Activated CD8-positive, alpha-beta memory T cell treated with anti-CD3 and anti-CD28 coated beads, Interleukin-2, amount 10 ng/mL, durations not matched to agents 7 days and 5 days (primary cell): ENCODE measurements at regions of chr6 and their contacts with region 1.

Region 1: GRCh38 chr6:53725791-53726431 is 60.4 kb upstream of the KLHL31 start:
- DNase-seq: peak; percentile 80
- ATAC-seq: peak; percentile 87
- H3K4me3 Mint-ChIP-seq: no peak overlapping the region
- H3K27ac Mint-ChIP-seq: no peak overlapping the region
- H3K4me1 Mint-ChIP-seq: peaks cover 13% of the 10 kb centered on the region
- H3K27me3 Mint-ChIP-seq: peaks cover 26% of the 10 kb centered on the region

Region 2: DNA sequence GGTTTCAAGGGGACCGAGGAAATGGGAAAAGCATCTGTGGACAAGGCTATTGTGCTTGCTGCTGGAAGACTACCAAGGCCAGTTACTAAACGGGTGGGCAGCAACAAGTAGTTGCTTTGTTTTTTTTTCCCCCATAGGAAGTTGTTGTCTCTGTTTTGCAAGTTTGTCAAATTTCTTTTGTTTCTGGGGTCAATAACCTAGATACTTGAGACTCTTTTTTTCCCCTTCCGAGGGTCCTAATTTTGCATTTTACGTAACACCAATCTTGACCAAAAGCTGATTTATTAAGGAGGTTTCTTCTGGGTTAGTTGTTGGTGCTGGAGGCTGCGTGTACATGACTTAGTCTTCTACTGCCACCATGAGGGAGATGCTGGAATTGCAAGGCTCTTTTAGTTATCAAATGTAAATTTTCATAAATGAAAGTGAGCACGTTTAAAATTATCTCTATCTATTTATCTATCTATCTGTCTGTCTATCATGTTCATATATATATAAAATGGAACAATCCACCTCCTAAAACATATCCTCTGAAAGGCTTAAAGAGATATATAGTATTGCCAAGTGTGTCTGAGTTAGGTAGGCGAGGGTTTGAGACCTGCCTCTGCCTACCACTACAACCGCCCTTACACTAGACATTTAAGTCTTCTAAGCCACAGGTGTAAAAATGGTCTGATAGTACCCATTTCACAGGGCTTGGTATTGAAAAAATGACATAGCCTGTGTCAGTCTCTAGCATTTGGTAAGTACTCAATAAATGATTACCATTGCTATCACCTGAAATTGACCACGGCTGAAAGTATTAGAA is 241.2 kb before region 1 on chr6:
- CTCF ChIA-PET with region 1: interaction called, 14 read pairs
- DNase-seq: peak; percentile 82
- ATAC-seq: peak; percentile 42
- H3K4me3 Mint-ChIP-seq: no peak overlapping the region
- H3K27ac Mint-ChIP-seq: no peak overlapping the region
- H3K4me1 Mint-ChIP-seq: peaks cover 35% of the 10 kb centered on the region
- H3K27me3 Mint-ChIP-seq: peaks cover 30% of the 10 kb centered on the region

Region 3: GRCh38 chr6:53544470-53545308 is 181.2 kb before region 1 on chr6 and contains the start of gene GCLC:
- CTCF ChIA-PET with region 1: interaction called, 12 read pairs
- DNase-seq: peak; percentile 94
- ATAC-seq: peak; percentile 62
- H3K4me3 Mint-ChIP-seq: peak within 1 kb of the TSS; percentile 96
- H3K27ac Mint-ChIP-seq: peak within 1 kb of the TSS; percentile 94
- H3K4me1 Mint-ChIP-seq: peaks cover 56% of the 10 kb centered on the region
- H3K27me3 Mint-ChIP-seq: peaks cover 13% of the 10 kb centered on the region
- total RNA-seq, gene GCLC: 33.7 to 36.3 TPM

Region 4: DNA sequence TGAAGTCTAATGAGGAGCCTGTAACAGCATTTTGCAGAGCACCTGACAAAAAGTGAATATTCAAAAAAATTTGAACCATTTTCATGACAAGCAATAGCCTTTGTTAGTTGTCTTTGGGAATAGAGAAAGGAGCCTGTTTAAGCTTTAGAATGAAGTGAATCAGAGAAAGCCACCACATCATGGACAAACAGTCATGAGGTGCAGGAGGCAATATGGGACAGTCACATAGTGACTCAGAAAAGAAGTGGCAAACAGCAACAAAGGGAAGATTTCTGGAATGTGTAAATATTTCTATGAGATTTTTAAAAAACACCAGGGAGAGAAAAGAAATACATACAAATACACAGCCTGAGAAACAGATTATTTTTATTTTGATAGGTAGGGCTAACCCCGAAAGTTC is 66.9 kb before region 1 on chr6:
- CTCF ChIA-PET with region 1: interaction called, 12 read pairs
- DNase-seq: no peak
- ATAC-seq: no peak
- H3K4me3 Mint-ChIP-seq: no peak overlapping the region
- H3K27ac Mint-ChIP-seq: no peak overlapping the region
- H3K4me1 Mint-ChIP-seq: no peaks in the 10 kb centered on the region
- H3K27me3 Mint-ChIP-seq: peaks cover 26% of the 10 kb centered on the region

Region 5: DNA sequence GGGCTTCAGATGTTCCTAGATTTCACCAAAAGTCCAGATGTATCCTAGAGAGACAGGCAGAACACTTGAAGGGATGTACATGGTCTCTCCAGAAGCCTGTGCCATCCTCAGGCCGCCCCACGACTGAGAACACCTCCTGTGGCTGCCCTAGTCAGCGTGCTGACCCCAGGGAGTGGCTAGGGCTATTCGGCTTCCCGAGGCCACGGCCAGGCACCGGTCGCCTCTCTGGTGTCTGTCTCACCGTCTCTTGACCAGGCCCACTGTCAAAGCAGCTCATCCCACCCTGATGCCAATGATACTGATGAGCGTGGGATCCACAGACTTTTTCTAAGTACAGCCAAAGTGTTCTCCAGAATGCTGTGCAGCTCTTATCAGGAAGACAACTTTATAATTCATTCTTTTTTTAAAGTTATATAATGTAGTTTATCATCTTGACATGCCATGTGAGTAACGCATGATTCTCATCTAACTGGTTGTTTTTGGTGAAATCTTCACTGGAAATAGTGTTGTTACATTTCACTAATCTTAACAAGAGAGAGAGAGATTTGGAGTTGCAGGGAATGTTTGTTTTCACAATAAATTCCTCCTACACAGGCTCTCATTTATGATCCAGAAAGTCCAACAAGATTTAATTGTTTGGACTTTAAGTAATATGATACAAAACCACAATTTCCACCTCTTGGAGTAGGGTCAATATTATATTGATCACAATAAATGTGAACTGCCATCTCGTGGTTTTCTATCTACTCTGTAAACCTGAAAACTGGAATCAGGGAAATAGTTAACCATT is 18.6 kb before region 1 on chr6:
- CTCF ChIA-PET with region 1: interaction called, 51 read pairs
- DNase-seq: no peak
- ATAC-seq: no peak
- H3K4me3 Mint-ChIP-seq: no peak overlapping the region
- H3K27ac Mint-ChIP-seq: no peak overlapping the region
- H3K4me1 Mint-ChIP-seq: no peaks in the 10 kb centered on the region
- H3K27me3 Mint-ChIP-seq: peaks cover 18% of the 10 kb centered on the region

Region 6: GRCh38 chr6:53956068-53956711 is 230.3 kb after region 1 on chr6:
- CTCF ChIA-PET with region 1: interaction called, 24 read pairs
- DNase-seq: peak; percentile 51
- ATAC-seq: peak; percentile 58
- H3K4me3 Mint-ChIP-seq: no peak overlapping the region
- H3K27ac Mint-ChIP-seq: no peak overlapping the region
- H3K4me1 Mint-ChIP-seq: no peaks in the 10 kb centered on the region
- H3K27me3 Mint-ChIP-seq: peaks cover 27% of the 10 kb centered on the region